Activated CD4-positive, alpha-beta memory T cell treated with anti-CD3 and anti-CD28 coated beads for 36 hours (primary cell): ENCODE measurements at regions of chr11 and their contacts with region 1.

Region 1: DNA sequence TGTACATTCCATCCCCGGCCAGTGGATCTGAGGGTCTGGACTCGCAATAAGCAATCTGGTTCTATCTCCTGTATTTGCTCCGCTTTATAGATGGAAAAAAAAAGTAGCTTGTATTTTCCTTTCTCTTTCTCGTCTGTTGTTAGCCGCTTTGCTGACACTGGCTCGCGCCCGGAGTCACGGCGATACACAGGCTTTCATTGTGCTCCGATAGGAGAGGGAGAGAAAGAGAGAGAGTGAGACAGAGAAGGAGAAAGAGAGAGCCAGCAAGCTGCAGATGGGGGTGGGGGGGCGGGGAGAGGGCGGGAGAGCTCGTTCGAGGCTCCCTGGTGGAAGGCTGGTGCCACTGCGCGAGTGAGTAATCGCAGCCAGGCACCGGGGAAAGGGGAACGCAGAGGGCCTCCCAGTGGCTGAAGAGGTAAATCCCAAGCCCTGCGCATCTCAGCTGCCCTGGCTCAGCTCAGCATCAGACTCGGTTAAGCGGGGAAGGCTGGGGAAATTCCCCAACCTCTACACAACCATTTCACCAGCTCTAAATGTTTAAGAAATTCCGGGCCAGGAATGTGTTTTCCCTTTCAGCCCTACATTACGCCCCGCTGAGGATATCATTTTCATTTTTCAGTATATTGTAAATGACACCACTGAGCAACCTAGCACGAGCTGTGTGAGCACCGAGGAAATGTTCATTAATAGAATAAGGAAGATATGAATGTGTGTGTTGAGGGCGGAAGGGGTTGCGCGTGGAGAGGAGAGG is at the start of gene MAML2:
- DNase-seq: peak; percentile 96
- H3K4me3 Mint-ChIP-seq: peak within 1 kb of the TSS; percentile 86
- H3K27ac Mint-ChIP-seq: peak within 1 kb of the TSS; percentile 95
- H3K4me1 Mint-ChIP-seq: peaks cover 26% of the 10 kb centered on the region
- H3K27me3 Mint-ChIP-seq: no peaks in the 10 kb centered on the region
- total RNA-seq, gene MAML2: 24.2 TPM

Region 2: GRCh38 chr11:95849087-95849825 is 493.9 kb before region 1 on chr11:
- CTCF ChIA-PET with region 1: interaction called, 11 read pairs
- POLR2A ChIA-PET with region 1: no interaction called
- intact Hi-C with region 1: no loop called
- DNase-seq: peak; percentile 39
- H3K4me3 Mint-ChIP-seq: no peak overlapping the region
- H3K27ac Mint-ChIP-seq: no peak overlapping the region
- H3K4me1 Mint-ChIP-seq: no peaks in the 10 kb centered on the region
- H3K27me3 Mint-ChIP-seq: no peaks in the 10 kb centered on the region

Region 3: DNA sequence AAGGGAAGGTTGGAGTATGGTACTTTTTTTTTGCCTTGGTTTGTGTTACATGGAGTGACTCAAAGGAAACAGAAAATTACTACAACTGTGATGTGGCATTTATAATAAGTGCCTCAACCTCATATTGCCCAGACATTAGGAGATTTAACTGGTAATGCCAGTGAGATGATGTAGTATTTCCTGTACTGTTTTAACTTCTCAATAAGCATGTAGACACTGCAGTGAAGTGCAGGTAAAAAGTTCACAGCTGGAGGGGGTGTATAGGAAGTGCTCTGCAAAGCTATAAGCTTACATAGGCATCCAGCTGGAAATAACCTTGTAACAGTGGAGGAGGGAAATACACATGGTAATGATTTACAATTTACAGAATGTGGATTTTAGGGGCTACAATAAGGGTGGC is 281.0 kb before region 1 on chr11:
- CTCF ChIA-PET with region 1: interaction called, 26 read pairs
- POLR2A ChIA-PET with region 1: interaction called, 8 read pairs
- intact Hi-C with region 1: loop called (anchors 1 kb)
- DNase-seq: peak; percentile 54
- H3K4me3 Mint-ChIP-seq: peak overlapping the region; percentile 31
- H3K27ac Mint-ChIP-seq: peak overlapping the region; percentile 88
- H3K4me1 Mint-ChIP-seq: peaks cover 75% of the 10 kb centered on the region
- H3K27me3 Mint-ChIP-seq: no peaks in the 10 kb centered on the region

Region 4: GRCh38 chr11:96197801-96198701 is 145.1 kb before region 1 on chr11:
- CTCF ChIA-PET with region 1: interaction called, 18 read pairs
- POLR2A ChIA-PET with region 1: interaction called, 4 read pairs
- intact Hi-C with region 1: loop called (anchors 1 kb)
- DNase-seq: peak; percentile 50
- H3K4me3 Mint-ChIP-seq: peak overlapping the region; percentile 28
- H3K27ac Mint-ChIP-seq: peak overlapping the region; percentile 94
- H3K4me1 Mint-ChIP-seq: peaks cover 86% of the 10 kb centered on the region
- H3K27me3 Mint-ChIP-seq: no peaks in the 10 kb centered on the region

Region 5: DNA sequence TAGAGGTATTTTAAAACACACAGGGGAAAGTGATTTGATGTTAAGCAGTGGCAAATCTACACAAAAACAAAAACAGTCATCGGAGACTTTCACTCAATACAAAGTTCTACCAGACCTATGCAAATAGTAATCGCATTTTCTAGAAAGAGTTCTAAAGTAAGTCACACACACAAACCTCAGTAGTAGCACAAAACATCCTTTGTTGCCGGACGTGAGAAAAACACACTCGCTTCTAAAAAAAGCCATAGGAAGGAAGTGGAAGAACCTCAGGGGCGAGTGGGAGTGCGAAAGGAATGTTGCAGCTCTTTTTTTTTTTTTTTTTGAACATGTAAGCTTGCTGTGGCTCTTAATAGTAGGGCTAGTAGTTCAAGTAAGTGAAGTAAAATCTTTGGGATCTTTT is 89.0 kb before region 1 on chr11:
- CTCF ChIA-PET with region 1: interaction called, 13 read pairs
- POLR2A ChIA-PET with region 1: interaction called, 3 read pairs
- intact Hi-C with region 1: loop called (anchors 1 kb)
- DNase-seq: peak; percentile 48
- H3K4me3 Mint-ChIP-seq: peak overlapping the region; percentile 46
- H3K27ac Mint-ChIP-seq: peak overlapping the region; percentile 71
- H3K4me1 Mint-ChIP-seq: peaks cover 84% of the 10 kb centered on the region
- H3K27me3 Mint-ChIP-seq: no peaks in the 10 kb centered on the region

Region 6: DNA sequence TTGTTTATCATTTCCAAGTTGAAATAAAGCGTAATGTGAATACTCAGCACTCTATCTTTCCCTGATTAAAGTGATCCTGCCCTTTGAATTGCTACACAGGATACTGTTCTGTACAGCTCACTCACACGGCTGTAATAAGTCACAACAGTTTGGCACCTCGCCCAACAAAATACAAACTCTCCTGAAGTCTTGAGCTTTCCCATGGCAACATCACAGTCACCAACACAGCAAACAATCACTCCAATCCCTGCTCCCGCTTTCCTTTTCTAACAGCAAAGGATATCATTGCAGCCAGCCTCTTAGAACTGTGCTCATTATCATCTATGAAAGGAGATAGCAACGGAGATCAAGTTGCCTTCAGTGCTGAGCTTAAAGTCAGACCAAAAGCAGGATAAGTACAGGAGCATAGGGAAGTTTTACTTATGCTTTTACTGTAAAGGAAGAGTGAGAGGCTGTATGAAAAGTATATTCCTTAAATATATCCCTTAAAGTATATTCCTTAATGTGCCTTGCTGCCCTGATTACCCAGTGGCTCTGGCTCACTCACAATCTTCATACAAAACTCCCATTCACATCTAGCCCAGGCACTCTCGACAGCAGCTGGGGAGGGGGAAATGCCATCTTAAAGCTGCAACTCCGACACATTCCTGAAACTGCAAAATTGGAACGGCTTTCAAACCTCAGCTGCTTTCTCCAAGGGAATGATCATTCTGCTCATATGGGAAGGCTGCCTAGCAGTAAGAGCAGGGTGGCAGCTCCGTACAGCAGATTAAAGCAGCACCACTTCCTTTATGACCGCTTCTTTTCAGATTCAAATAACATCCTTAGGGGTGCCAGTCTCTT is 36.0 kb before region 1 on chr11:
- CTCF ChIA-PET with region 1: interaction called, 10 read pairs
- POLR2A ChIA-PET with region 1: interaction called, 4 read pairs
- intact Hi-C with region 1: no loop called
- DNase-seq: no peak
- H3K4me3 Mint-ChIP-seq: peak overlapping the region; percentile 27
- H3K27ac Mint-ChIP-seq: peak overlapping the region; percentile 2
- H3K4me1 Mint-ChIP-seq: peaks cover 69% of the 10 kb centered on the region
- H3K27me3 Mint-ChIP-seq: no peaks in the 10 kb centered on the region

Region 7: DNA sequence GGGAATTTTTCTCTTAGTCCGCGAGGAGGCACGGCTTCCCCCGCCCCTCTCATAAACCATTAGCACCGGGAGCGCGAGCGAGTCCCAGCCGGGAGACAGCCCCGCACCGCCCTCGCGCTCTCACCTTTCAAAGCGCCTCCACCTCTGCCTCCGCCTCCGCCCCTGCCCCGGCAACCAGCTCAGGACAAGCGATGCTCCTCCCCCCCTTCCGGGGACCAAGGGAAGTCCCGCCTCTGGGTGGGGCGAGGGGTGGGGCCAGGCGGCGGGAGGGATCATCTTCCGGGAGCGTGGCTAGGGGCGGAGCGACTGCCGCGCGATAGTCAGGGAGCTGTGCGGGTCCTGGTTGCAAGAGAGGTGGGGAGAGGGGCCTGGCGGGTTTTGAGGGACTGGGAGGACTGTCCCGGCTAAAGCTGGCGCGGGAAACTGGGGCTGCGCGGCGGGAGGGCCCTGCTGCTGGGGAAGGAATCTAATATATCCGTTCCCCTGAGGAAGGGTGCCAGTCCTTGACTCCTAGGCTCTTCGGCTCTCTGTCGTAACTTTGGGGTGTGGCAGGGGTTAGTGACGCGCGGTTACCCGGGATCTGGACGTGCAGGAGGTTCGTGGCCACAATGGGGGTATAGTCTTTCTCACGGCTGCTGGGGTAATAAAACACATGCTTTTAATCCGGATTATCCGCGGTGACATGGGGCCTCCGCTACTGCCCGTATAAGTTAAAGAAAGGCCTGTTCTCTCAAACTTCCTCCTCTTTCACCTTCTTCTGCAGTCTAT is 46.8 kb after region 1 on chr11 and contains the starts of genes CCDC82 and JRKL:
- CTCF ChIA-PET with region 1: interaction called, 31 read pairs
- POLR2A ChIA-PET with region 1: interaction called, 28 read pairs
- intact Hi-C with region 1: loop called (anchors 1 kb)
- DNase-seq: peak; percentile 99
- H3K4me3 Mint-ChIP-seq: peak within 1 kb of the TSS; percentile 86
- H3K27ac Mint-ChIP-seq: peak within 1 kb of the TSS; percentile 85
- H3K4me1 Mint-ChIP-seq: peaks cover 67% of the 10 kb centered on the region
- H3K27me3 Mint-ChIP-seq: no peaks in the 10 kb centered on the region
- total RNA-seq, gene CCDC82: 30.6 to 35.3 TPM
- total RNA-seq, gene JRKL: 13.7 to 15.4 TPM

Region 8: DNA sequence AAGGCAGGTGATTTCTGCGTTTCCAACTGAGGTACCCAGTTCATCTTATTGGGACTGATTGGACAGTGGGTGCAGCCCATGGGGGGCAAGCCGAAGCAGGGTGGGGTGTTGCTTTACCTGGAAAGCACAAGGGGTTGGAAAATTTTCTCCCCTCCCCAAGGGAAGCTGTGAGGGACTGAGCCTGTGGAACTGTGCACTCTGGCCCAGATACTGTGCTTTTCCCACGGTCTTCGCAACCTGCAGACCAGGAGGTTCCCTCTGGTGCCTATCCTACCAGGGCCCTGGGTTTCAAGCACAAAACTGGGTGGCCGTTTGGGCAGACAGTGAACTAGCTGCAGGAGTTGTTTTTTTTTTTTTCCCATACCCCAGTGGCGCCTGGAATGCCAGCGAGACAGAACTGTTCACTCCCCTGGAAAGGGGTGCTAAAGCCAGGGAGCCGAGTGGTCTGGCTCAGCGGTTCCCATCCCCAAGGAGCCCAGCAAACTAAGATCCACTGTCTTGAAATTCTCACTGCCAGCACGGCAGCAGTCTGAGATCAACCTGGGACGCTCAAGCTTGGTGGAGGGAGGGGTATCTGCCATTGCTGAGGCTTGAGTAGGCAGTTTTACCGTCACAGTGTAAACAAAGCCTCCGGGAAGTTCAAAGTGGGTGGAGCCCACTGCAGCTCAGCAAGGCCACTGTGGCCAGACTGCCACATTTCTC is 143.9 kb after region 1 on chr11:
- CTCF ChIA-PET with region 1: no interaction called
- POLR2A ChIA-PET with region 1: no interaction called
- intact Hi-C with region 1: no loop called
- DNase-seq: no peak
- H3K4me3 Mint-ChIP-seq: no peak overlapping the region
- H3K27ac Mint-ChIP-seq: no peak overlapping the region
- H3K4me1 Mint-ChIP-seq: no peaks in the 10 kb centered on the region
- H3K27me3 Mint-ChIP-seq: peaks cover 22% of the 10 kb centered on the region